Caco-2 (cell line): ENCODE measurements at regions of chr3 and their contacts with region 1.

Region 1: DNA sequence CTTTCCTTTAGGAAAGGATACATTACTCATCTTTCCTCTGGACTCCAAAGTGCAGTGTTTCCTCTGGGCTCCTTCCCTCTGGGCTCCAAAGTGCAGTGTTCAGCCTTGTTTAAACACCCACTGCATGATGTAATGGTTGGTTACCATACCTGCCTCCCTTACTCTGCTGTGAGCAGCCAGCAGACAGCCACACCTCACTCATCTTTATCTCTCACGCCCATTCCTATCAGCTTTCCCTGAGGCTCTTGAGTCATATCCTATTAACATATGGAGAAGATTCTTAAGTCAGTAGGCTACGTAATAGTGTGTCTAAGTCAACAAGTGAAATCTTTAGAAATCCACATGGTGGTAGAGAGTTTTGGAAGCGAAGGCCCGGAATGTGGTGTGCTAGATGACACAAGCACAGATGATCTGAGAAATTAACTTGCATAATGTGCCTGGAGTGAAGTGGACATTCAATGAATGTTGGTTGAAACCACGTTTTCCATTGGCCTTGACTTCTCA is 97.2 kb upstream of the CTNNB1 start:
- DNase-seq: peak; percentile 82 to 86
- H3K4me3 ChIP-seq: no peak overlapping the region
- H3K4me3 Mint-ChIP-seq: no peak overlapping the region
- H3K27ac Mint-ChIP-seq: no peak overlapping the region
- H3K4me1 ChIP-seq: peaks cover 29% of the 10 kb centered on the region
- H3K4me1 Mint-ChIP-seq: peaks cover 7% of the 10 kb centered on the region
- H3K27me3 ChIP-seq: no peaks in the 10 kb centered on the region
- H3K27me3 Mint-ChIP-seq: no peaks in the 10 kb centered on the region
- CTCF ChIP-seq: no peak

Region 2: DNA sequence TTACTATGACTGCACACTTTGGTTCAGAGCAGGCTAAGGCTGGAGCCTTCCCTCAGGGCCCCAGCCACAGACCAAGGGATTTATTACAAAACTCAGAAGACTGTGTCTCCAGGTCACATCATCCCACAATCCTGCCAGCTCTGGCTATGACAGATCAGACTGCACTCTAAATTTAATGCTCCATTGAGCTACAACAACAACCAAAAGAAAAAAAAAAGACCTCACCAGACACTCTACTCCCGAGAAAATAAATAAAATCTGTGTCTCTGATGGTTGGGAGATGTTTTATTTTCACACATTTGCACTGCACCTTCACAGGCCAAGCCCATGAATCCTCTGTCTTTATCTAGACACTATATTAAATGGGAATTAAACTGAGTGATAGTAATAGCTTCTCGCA is 46.4 kb after region 1 on chr3:
- CTCF ChIA-PET with region 1: no interaction called
- POLR2A ChIA-PET with region 1: no interaction called
- intact Hi-C with region 1: no loop called
- DNase-seq: no peak
- H3K4me3 ChIP-seq: no peak overlapping the region
- H3K4me3 Mint-ChIP-seq: no peak overlapping the region
- H3K27ac Mint-ChIP-seq: no peak overlapping the region
- H3K4me1 ChIP-seq: no peaks in the 10 kb centered on the region
- H3K4me1 Mint-ChIP-seq: peaks cover 9% of the 10 kb centered on the region
- H3K27me3 ChIP-seq: no peaks in the 10 kb centered on the region
- H3K27me3 Mint-ChIP-seq: no peaks in the 10 kb centered on the region
- CTCF ChIP-seq: no peak

Region 3: DNA sequence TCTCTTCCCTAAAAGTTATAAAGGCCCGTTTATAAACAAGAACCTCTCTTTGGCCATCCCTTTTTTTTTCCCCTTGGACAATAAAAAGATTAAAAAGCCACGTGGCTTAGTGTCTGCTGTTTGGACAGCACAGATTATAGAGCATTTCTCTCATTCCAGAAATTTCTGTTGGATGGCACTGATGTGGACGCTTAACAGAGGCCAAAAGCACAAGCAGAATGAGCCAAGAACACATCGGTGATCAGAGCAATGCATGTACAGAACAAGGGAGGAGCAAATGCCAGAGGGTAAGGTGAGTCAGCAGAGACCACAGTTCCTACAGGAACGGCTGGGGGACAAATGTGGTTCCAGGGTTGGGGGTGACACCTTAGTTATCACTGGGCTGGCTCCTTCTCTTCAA is 66.9 kb after region 1 on chr3:
- CTCF ChIA-PET with region 1: no interaction called
- POLR2A ChIA-PET with region 1: no interaction called
- intact Hi-C with region 1: loop called (anchors 5 kb)
- DNase-seq: peak; percentile 52 to 56
- H3K4me3 ChIP-seq: no peak overlapping the region
- H3K4me3 Mint-ChIP-seq: peak overlapping the region; percentile 71
- H3K27ac Mint-ChIP-seq: peak overlapping the region; percentile 84
- H3K4me1 ChIP-seq: peaks cover 33% of the 10 kb centered on the region
- H3K4me1 Mint-ChIP-seq: peaks cover 50% of the 10 kb centered on the region
- H3K27me3 ChIP-seq: no peaks in the 10 kb centered on the region
- H3K27me3 Mint-ChIP-seq: no peaks in the 10 kb centered on the region
- CTCF ChIP-seq: no peak

Region 4: DNA sequence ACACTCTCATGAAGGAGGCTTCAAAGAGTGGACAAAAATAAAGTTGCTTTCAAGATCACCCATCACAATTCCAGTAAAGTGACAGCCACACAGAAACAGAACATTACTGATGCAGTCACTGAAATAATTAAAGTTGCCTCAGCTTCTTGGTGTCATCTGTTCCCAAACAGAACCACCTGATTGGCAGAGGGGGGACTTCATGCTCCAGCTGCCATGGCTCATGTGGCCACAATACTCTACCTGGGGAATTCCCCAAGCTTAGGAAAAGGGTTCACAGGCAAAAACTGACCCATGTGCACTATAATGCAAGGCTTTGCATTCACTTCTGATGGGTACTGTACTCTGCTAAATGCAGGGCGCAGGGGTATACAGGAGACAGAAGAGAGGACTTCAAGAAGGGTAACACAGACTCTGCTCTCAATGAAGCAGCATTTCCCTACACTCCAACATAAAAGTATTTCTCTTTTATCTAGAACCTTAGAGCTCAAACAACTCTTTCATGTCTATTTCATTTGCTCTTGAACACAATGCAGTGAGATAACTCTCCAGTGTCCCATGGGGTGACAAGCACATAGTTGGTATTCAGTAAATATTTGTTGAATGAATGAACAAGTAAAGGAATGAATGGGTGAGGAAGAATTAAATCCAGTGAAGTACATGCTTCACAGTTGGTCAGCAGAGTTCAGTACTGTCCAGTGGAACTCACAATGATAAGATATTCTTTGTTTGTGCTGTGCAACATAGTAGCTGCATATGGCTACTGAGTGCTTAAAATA is 88.6 kb after region 1 on chr3:
- CTCF ChIA-PET with region 1: no interaction called
- POLR2A ChIA-PET with region 1: no interaction called
- intact Hi-C with region 1: loop called (anchors 1 kb)
- DNase-seq: peak in 1 of 2 experiments; percentile 49
- H3K4me3 ChIP-seq: no peak overlapping the region
- H3K4me3 Mint-ChIP-seq: no peak overlapping the region
- H3K27ac Mint-ChIP-seq: peak overlapping the region; percentile 69
- H3K4me1 ChIP-seq: peaks cover 30% of the 10 kb centered on the region
- H3K4me1 Mint-ChIP-seq: peaks cover 42% of the 10 kb centered on the region
- H3K27me3 ChIP-seq: no peaks in the 10 kb centered on the region
- H3K27me3 Mint-ChIP-seq: no peaks in the 10 kb centered on the region
- CTCF ChIP-seq: no peak